ENCODE measurements at regions of chr17 and their contacts with region 1.

Region 1: DNA sequence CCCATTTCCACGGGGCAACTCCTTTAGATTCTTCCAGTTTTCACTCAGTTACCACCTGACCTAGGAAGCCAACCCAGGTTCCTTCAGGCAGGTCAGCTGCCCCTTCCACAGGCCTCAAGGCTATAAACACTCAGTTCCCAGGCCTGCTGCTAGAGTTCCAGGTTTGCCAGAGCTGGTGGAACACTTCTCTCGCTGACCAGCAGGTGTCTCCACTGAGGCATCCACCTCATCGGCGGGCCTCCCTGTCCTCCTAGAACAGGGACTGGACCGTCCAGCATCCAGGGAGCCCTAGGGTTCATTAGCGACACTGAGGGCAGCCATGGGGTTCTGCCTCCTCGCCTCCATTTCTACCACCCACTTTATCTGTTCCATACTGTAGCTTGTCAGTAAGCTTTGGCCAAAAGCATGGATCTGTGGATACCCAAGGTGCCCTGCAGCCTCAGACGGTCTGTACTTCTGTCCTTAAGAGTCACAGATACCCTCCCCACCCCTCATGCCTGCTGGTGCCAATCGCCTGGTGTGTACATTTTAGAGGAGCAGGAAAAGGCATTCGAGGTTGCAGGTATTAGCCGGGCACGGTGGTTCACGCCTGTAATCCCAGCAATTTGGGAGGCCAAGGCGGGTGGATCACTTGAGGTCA is 29.0 kb downstream of the PIMREG start:
- DNase-seq: no peak
- H3K4me3 ChIP-seq: no peak overlapping the region
- CTCF ChIP-seq: peak; percentile 96

Region 2: GRCh38 chr17:6000426-6000825 is 472.8 kb before region 1 on chr17:
- CTCF ChIA-PET with region 1: no interaction called
- POLR2A ChIA-PET with region 1: no interaction called
- DNase-seq: no peak
- H3K4me3 ChIP-seq: no peak overlapping the region
- CTCF ChIP-seq: no peak

Region 3: GRCh38 chr17:6443692-6444569 is 29.3 kb before region 1 on chr17 and contains the start of gene PIMREG:
- CTCF ChIA-PET with region 1: interaction called, 13 read pairs
- POLR2A ChIA-PET with region 1: no interaction called
- DNase-seq: peak; percentile 29
- H3K4me3 ChIP-seq: peak within 1 kb of the TSS; percentile 72
- CTCF ChIP-seq: no peak

Region 4: GRCh38 chr17:6461792-6462524 is 11.3 kb before region 1 on chr17:
- CTCF ChIA-PET with region 1: interaction called, 27 read pairs
- POLR2A ChIA-PET with region 1: no interaction called
- DNase-seq: no peak
- H3K4me3 ChIP-seq: no peak overlapping the region
- CTCF ChIP-seq: no peak

Region 5: GRCh38 chr17:6548578-6549330 is 75.5 kb after region 1 on chr17:
- CTCF ChIA-PET with region 1: interaction called, 24 read pairs
- POLR2A ChIA-PET with region 1: no interaction called
- DNase-seq: no peak
- H3K4me3 ChIP-seq: no peak overlapping the region
- CTCF ChIP-seq: no peak

Region 6: DNA sequence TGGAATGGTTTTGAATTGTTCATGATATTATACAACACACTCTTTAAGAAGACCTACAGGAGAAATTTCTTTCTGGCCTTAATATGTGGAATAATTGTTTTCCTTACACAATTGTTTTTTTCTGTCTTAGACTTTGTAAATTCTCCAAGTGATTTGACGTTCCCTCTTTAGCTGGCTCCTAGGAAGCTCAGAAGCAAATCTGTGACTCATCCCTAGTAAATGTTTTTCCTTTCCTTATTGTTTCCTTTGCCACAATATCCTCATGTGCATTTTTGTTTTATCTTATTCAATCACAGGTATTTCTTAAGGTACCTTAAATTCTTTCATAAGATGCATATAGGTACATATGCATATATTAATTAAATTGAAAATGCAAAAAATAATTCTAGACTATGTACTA is 153.8 kb after region 1 on chr17:
- CTCF ChIA-PET with region 1: interaction called, 15 read pairs
- POLR2A ChIA-PET with region 1: no interaction called
- DNase-seq: no peak
- H3K4me3 ChIP-seq: no peak overlapping the region
- CTCF ChIP-seq: no peak

Region 7: DNA sequence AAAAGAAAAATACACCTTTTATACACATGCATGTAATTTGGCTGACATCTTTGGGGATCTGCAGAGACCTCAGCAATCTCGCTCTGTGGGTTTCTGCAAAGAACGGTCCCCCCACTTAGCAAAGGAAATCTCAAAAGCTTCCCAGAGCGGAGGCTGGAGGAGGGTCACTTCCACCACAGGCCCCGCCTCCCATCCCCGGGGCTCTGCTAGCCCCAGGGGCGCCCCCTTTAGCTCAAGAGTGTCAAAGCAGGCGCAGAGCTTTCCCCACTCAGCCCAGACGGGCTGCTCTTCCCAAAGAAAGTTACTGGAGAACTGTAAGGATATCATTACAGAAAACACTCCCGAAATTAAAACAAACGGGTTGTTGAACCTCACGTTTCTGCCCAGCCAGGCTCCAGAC is 228.5 kb after region 1 on chr17:
- CTCF ChIA-PET with region 1: no interaction called
- POLR2A ChIA-PET with region 1: no interaction called
- DNase-seq: no peak
- H3K4me3 ChIP-seq: no peak overlapping the region
- CTCF ChIP-seq: peak; percentile 34

Measured in AG04449 (cell line).